Activated CD8-positive, alpha-beta T cell treated with anti-CD3 and anti-CD28 coated beads, Interleukin-2, amount 10 ng/mL, durations not matched to agents 7 days and 5 days (primary cell): ENCODE measurements at regions of chr4 and their contacts with region 1.

Region 1: GRCh38 chr4:112951362-112952312 is 97.8 kb upstream of the ANK2 start:
- DNase-seq: no peak
- ATAC-seq: no peak
- H3K4me3 Mint-ChIP-seq: no peak overlapping the region
- H3K27ac Mint-ChIP-seq: no peak overlapping the region
- H3K4me1 Mint-ChIP-seq: no peaks in the 10 kb centered on the region
- H3K27me3 Mint-ChIP-seq: peaks cover 4% of the 10 kb centered on the region

Region 2: DNA sequence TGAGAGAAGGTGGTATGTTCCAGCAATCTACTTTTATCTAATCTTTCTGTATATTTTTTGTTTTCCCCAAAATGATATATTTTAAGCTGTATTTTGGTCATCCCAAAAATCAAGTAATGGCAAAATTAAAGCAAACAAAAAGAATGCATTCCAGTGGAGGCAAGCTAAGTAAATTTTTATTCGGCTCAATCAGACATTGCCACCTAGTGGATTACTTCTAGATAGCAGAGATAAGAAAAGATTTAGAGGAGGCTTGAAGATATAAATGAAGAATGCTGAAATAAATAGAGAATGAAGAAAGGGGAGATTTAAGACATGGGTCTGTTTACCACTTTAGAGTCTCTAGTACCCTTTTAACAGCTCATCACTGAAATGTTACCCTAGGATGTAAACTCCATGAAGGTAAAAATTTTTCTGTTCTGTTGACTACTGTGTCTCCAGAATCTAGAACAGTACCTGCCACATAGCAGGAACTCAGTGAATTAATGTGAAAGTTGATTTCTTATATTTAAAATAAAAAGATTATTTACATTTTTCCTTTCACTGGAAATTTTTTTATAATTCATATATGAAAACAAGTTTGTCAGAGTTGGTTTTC is 13.1 kb before region 1 on chr4:
- CTCF ChIA-PET with region 1: interaction called, 27 read pairs
- POLR2A ChIA-PET with region 1: no interaction called
- DNase-seq: no peak
- ATAC-seq: no peak
- H3K4me3 Mint-ChIP-seq: no peak overlapping the region
- H3K27ac Mint-ChIP-seq: no peak overlapping the region
- H3K4me1 Mint-ChIP-seq: no peaks in the 10 kb centered on the region
- H3K27me3 Mint-ChIP-seq: peaks cover 4% of the 10 kb centered on the region

Region 3: GRCh38 chr4:113009461-113009860 is 57.8 kb after region 1 on chr4:
- CTCF ChIA-PET with region 1: no interaction called
- POLR2A ChIA-PET with region 1: no interaction called
- DNase-seq: no peak
- ATAC-seq: no peak
- H3K4me3 Mint-ChIP-seq: no peak overlapping the region
- H3K27ac Mint-ChIP-seq: no peak overlapping the region
- H3K4me1 Mint-ChIP-seq: no peaks in the 10 kb centered on the region
- H3K27me3 Mint-ChIP-seq: no peaks in the 10 kb centered on the region

Region 4: DNA sequence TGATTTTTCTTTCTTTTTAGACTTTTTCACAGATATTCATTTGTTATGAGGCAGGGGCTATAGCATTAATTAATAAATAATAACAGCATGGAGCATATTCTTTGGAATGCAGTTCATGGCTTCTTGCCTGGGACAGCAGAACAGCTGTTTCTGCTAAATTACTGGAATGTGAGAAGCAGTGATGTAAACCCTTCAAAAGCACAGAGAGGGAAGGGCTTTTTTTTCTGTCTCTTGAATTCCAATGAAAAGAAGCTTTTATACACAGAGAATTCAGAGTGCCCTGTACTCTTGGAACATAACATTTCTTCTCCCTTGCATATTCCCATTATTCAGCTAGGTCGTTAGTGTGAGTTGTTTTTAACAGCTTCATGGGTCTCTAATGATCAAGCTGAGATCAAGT is 69.3 kb after region 1 on chr4:
- CTCF ChIA-PET with region 1: no interaction called
- POLR2A ChIA-PET with region 1: no interaction called
- DNase-seq: no peak
- ATAC-seq: no peak
- H3K4me3 Mint-ChIP-seq: no peak overlapping the region
- H3K27ac Mint-ChIP-seq: no peak overlapping the region
- H3K4me1 Mint-ChIP-seq: no peaks in the 10 kb centered on the region
- H3K27me3 Mint-ChIP-seq: peaks cover 3% of the 10 kb centered on the region